Motor neuron (in vitro differentiated cells): ENCODE measurements at regions of chr12 and their contacts with region 1.

Region 1: GRCh38 chr12:45703942-45704341 is 25.6 kb upstream of the ARID2 start:
- ATAC-seq: no peak
- H3K4me3 ChIP-seq: no peak overlapping the region
- H3K27ac ChIP-seq: no peak overlapping the region
- H3K4me1 ChIP-seq: no peaks in the 10 kb centered on the region

Region 2: DNA sequence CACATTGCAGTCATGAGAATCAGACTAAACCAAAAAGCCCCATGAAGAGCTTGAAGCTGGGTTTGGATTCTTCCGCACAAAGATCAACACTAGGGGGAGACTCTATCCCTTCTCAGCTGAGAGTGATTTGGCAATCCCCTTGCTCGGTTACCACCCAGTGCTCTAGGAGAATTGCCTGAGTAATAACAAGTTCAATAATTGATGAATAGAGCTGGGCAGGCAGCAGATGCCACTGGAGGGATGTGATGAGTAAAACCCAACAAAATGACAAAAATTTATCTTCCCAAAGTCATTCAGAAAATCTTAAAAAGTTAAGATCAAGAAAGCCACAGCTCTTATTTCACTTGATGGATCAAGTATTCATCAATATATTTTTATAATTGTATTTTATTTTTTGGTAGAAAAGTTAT is 160.0 kb before region 1 on chr12:
- in situ Hi-C with region 1: loop called in 3 of 9 experiments (anchors 25 kb)
- ATAC-seq: peak in 4 of 8 experiments; percentile 67 to 99 (median 95)
- H3K4me3 ChIP-seq: no peak overlapping the region
- H3K27ac ChIP-seq: no peak overlapping the region
- H3K4me1 ChIP-seq: peaks cover 8 to 22% of the 10 kb centered on the region in 2 donors

Region 3: DNA sequence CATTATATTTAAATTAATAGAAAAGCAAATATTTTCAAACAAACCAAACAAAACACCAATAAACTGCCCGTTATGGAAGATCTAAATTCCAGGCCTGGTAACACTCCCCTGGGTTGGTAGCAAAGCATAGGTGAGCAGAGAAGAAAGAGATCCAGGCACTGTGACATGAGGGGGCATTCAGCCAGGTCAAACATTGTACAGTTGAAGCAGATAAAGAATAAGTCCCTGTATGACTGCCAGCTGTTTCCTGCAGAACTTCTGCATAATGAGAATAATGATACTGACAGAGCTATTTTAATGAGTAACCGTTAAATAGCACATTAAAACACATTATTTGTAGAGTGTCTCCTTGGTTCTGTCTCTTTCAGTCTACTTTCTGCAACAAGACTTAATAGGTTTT is 529.5 kb after region 1 on chr12:
- in situ Hi-C with region 1: no loop called
- ATAC-seq: no peak
- H3K4me3 ChIP-seq: no peak overlapping the region
- H3K27ac ChIP-seq: no peak overlapping the region
- H3K4me1 ChIP-seq: no peaks in the 10 kb centered on the region